HepG2 (cell line): ENCODE measurements at regions of chr16 and their contacts with region 1.

Region 1: DNA sequence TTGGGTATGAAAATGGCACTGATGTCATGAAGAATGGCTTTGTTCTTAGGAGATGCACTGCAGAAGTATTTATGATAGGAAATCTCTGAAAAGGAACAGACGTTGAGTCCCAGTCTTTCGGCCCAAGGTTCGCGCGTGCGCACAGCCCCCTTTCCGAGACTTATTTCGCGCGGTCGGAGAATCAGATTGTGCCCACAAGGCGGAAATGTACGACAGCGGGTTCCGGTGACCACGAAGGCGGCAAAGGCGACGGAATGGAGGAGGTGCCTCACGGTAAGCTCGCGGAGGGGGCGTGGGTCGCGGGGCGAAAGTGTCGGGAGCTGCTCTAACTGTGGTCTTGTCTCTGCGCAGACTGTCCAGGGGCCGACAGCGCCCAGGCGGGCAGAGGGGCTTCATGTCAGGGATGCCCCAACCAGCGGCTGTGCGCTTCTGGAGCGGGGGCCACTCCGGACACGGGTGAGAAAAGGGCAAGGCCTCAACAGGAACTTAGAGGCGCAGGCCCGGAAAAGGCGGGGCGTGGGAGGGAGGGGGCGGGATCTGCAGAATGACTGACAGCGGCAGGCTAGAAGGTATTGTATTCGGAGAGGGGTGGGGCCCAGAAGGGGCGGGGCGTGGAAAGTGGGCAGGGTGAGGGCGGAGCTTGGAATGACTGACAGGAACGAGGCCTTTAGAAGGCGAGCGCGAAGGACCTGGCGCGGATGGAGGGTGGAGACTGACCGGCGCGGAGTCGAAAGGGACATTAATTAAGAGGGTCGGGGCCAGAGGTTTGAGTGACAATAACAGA is at the start of gene NUBP1:
- DNase-seq: peak; percentile 98
- ATAC-seq: peak; percentile 96
- H3K4me3 ChIP-seq: peak within 1 kb of the TSS; percentile 71 to 77 (median 74)
- H3K27ac ChIP-seq: peak within 1 kb of the TSS; percentile 94
- H3K4me1 ChIP-seq: peaks cover 31% of the 10 kb centered on the region
- H3K27me3 ChIP-seq: no peaks in the 10 kb centered on the region; a peak in 1 of 5 replicates
- CTCF ChIP-seq: peak; percentile 33
- EP300 ChIP-seq: peak in 1 of 2 experiments; percentile 61; a peak in 2 of 4 replicates
- POLR2A ChIP-seq: peak; percentile 90 to 97
- RAD21 ChIP-seq: peak; percentile 73; the same call in 1 of the 2 replicates
- total RNA-seq, gene NUBP1: 70.4 and 85.8 TPM in 2 replicates

Region 2: GRCh38 chr16:10521681-10522274 is 222.0 kb before region 1 on chr16:
- CTCF ChIA-PET with region 1: interaction called, 136 read pairs
- POLR2A ChIA-PET with region 1: interaction called, 30 read pairs
- in situ Hi-C with region 1: loop called (anchors 5 kb)
- intact Hi-C with region 1: no loop called
- DNase-seq: peak; percentile 79
- ATAC-seq: peak; percentile 42
- H3K4me3 ChIP-seq: no peak overlapping the region
- H3K27ac ChIP-seq: no peak overlapping the region
- H3K4me1 ChIP-seq: peaks cover 27% of the 10 kb centered on the region
- H3K27me3 ChIP-seq: no peaks in the 10 kb centered on the region
- CTCF ChIP-seq: peak; percentile 93
- EP300 ChIP-seq: no peak
- POLR2A ChIP-seq: no peak
- RAD21 ChIP-seq: peak; percentile 58; the same call in 1 of the 2 replicates

Region 3: DNA sequence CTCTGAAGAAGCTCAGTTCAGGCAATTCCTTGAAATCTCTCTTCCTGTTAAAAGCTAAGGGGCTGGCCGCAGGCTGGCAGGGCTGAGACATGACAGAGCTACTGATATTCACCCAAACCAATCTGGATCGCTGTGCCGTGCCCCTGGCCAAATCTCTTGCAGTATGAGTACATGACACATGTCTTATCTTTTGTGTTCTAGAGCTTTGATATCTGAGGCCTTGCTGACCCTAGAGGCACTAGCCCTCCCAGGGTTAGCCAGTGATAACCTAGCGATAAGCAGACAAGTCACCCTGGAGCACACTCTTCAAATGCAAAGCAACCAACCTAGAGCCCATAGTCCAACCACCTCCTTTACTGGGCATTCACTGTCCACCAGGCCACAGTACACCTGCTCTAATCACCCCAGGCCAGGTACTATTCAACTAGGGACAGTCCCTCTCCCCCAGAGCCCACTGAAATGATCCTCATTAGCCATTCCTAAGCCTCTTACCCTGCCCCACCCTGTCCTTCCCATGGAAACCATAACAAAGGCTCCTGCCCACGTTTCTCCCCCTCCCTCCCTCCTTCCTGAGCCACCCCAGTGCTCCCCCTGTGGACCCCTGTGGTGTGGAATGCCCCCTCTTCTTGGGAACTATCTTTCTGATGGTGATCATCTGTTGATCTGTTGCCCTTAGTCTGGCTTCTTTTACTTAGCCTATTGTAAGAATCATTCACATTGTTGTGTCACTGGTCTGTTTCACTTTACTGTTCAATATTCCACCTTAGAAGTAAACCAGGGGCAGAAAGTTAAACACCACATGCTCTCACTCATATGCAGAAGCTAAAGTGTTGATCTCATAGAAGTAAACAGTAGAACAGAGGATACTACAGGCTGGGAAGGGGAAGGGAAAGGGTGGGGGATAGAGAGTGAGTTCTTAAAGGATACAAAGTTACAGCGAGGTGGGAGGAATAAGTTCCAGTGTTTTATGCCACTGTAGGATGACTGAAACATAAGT is 101.6 kb before region 1 on chr16:
- CTCF ChIA-PET with region 1: no interaction called
- POLR2A ChIA-PET with region 1: interaction called, 12 read pairs
- in situ Hi-C with region 1: no loop called
- intact Hi-C with region 1: loop called (anchors 5 kb)
- DNase-seq: peak; percentile 60
- ATAC-seq: peak; percentile 78
- H3K4me3 ChIP-seq: peak overlapping the region in 2 of 3 experiments; percentile 1 to 49; a peak in 3 of 6 replicates
- H3K27ac ChIP-seq: peak overlapping the region; percentile 24
- H3K4me1 ChIP-seq: peaks cover 80% of the 10 kb centered on the region
- H3K27me3 ChIP-seq: no peaks in the 10 kb centered on the region; a peak in 1 of 5 replicates
- CTCF ChIP-seq: peak; percentile 14
- EP300 ChIP-seq: peak; percentile 28 to 80; a peak in 2 of 4 replicates
- POLR2A ChIP-seq: no peak
- RAD21 ChIP-seq: no peak

Region 4: DNA sequence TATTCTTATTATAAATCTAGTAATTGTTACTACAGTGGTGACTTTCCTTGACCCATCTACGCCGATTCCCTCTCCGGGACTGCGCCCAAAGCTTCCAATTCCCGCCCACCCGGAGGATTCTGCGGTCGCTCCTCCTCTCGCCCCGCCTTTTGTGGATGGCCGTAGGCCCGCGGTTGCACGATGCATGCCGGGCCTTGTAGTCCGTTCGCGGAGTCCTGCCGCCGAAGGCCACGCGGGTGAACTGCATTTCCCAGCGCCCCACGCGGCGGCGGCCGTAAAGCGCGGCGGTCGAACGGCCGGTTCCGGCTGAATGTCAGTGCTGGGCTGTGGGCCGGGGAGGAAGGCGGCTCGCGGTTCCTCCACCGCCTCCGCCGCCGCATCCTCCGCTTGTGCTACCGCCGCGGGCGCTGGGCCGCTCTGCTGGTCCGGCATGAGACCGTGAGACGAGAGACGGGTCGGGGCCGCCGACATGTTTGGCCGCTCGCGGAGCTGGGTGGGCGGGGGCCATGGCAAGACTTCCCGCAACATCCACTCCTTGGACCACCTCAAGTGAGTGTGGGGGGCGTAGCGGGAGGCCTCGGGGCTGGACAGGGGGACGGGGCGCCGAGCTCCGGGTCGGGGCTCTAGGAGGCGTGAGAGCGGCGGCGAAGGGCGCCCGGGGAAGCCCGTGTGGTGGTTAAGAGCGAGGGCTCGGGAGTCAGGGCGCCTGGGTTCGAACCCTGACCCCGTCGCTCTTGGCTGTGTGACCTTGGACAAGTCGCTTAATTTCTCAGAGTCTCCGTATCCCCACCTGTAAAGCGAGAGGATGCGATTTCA is 200.7 kb after region 1 on chr16 and contains the start of gene CLEC16A:
- CTCF ChIA-PET with region 1: no interaction called
- POLR2A ChIA-PET with region 1: interaction called, 11 read pairs
- in situ Hi-C with region 1: no loop called
- intact Hi-C with region 1: no loop called
- DNase-seq: peak; percentile 97
- ATAC-seq: peak; percentile 83
- H3K4me3 ChIP-seq: peak within 1 kb of the TSS; percentile 91 to 93 (median 92)
- H3K27ac ChIP-seq: peak within 1 kb of the TSS; percentile 24
- H3K4me1 ChIP-seq: peaks cover 52% of the 10 kb centered on the region
- H3K27me3 ChIP-seq: no peaks in the 10 kb centered on the region; a peak in 1 of 5 replicates
- CTCF ChIP-seq: peak; percentile 28
- EP300 ChIP-seq: peak in 1 of 2 experiments; percentile 61; a peak in 2 of 4 replicates
- POLR2A ChIP-seq: peak; percentile 71 to 72
- RAD21 ChIP-seq: peak; percentile 70; the same call in 1 of the 2 replicates
- total RNA-seq, gene CLEC16A: 10.3 and 13.6 TPM in 2 replicates